ENCODE measurements at regions of chr12 and their contacts with region 1.

Region 1: GRCh38 chr12:7933255-7933729 is 2.7 kb downstream of the SLC2A3 start:
- DNase-seq: peak; percentile 79
- H3K4me3 Mint-ChIP-seq: no peak overlapping the region
- H3K27ac Mint-ChIP-seq: no peak overlapping the region
- H3K4me1 Mint-ChIP-seq: peaks cover 37% of the 10 kb centered on the region
- H3K27me3 Mint-ChIP-seq: no peaks in the 10 kb centered on the region

Region 2: DNA sequence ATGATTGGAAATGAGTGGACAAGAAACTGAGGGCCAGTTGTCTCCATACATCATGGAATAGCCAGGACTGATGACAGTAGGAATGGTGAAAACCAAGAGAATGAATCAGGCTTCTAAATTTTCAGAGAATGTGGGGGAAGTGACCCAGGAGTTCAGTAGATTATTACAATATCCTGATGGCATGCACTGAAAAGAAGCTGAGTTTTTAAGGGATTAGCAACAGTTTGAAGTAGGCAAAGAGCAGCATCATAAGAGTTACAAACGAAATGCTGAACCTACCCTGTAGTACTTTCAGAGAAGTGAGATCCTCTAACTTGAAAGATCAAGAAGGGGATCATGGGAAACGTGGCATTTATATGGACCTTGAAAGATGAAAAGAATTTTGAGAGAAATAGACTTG is 73.7 kb before region 1 on chr12:
- CTCF ChIA-PET with region 1: interaction called, 11 read pairs
- POLR2A ChIA-PET with region 1: interaction called, 4 read pairs
- DNase-seq: no peak
- H3K4me3 Mint-ChIP-seq: no peak overlapping the region
- H3K27ac Mint-ChIP-seq: no peak overlapping the region
- H3K4me1 Mint-ChIP-seq: peaks cover 11% of the 10 kb centered on the region
- H3K27me3 Mint-ChIP-seq: peaks cover 9% of the 10 kb centered on the region

Region 3: DNA sequence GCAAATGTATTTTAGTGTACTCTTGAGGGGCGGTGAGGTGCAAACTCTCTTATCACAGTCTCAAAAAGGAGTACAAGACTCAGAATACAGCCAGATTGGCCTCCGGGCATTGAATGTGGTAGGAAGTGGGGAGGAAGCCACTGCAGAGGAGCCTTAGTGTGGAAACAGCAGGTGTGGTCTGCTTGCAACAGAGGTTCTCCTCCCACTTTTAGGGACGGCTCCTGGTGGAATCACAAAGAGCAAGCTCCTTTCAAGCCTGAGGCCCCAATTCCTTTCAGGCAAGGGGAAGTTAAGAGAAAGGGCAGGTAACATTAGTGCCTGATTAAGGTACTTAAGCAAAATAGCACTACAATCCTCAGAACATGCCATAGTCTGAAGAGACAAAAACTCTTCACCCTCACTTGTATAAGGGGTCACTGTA is 26.4 kb after region 1 on chr12:
- CTCF ChIA-PET with region 1: interaction called, 346 read pairs
- POLR2A ChIA-PET with region 1: interaction called, 819 read pairs
- DNase-seq: peak; percentile 71
- H3K4me3 Mint-ChIP-seq: peak overlapping the region; percentile 86
- H3K27ac Mint-ChIP-seq: peak overlapping the region; percentile 88
- H3K4me1 Mint-ChIP-seq: peaks cover 48% of the 10 kb centered on the region
- H3K27me3 Mint-ChIP-seq: no peaks in the 10 kb centered on the region

Region 4: DNA sequence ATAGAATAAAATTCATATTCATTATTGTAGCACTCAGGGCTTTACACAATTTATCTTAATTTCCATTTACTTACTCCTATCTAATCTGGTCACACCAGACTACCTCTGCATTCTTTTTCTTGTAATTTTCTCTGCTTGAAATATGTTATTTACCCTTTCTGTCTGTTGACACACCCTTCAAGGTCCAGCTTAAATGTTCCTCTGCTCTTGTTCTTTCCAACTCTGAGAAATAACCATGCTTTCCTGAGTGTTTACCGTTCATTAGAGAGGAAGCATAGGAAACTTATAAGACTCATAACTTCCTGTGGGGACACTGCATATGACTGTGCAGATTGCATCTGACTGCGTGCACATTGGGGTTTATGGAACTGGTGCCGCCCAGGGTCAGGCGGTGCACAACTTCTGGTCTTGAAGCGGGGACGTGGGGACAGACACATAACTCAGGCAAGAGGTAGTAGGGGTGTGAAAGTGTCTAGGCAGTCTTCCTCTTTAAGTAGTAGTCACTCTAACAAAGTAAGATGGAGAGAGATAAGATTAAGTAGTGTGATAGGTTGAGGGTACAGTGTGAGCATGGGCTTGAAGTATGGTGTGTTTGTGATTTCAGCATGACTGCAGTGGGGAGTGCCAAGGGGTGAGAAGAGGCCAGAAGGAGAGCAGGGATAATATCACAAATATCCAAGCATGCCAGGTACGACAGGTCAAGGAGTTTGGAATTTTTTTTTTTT is 56.7 kb after region 1 on chr12:
- CTCF ChIA-PET with region 1: interaction called, 100 read pairs
- POLR2A ChIA-PET with region 1: interaction called, 106 read pairs
- DNase-seq: peak; percentile 88
- H3K4me3 Mint-ChIP-seq: peak overlapping the region; percentile 65
- H3K27ac Mint-ChIP-seq: peak overlapping the region; percentile 86
- H3K4me1 Mint-ChIP-seq: peaks cover 56% of the 10 kb centered on the region
- H3K27me3 Mint-ChIP-seq: no peaks in the 10 kb centered on the region

Region 5: GRCh38 chr12:8026291-8026900 is 93.1 kb after region 1 on chr12:
- CTCF ChIA-PET with region 1: interaction called, 5 read pairs
- POLR2A ChIA-PET with region 1: interaction called, 10 read pairs
- DNase-seq: peak; percentile 98
- H3K4me3 Mint-ChIP-seq: peak overlapping the region; percentile 88
- H3K27ac Mint-ChIP-seq: peak overlapping the region; percentile 99
- H3K4me1 Mint-ChIP-seq: peaks cover 17% of the 10 kb centered on the region
- H3K27me3 Mint-ChIP-seq: no peaks in the 10 kb centered on the region

Region 6: GRCh38 chr12:8088574-8088973 is 155.3 kb after region 1 on chr12:
- CTCF ChIA-PET with region 1: interaction called, 3 read pairs
- POLR2A ChIA-PET with region 1: interaction called, 12 read pairs
- DNase-seq: peak; percentile 55
- H3K4me3 Mint-ChIP-seq: peak overlapping the region; percentile 70
- H3K27ac Mint-ChIP-seq: peak overlapping the region; percentile 87
- H3K4me1 Mint-ChIP-seq: peaks cover 50% of the 10 kb centered on the region
- H3K27me3 Mint-ChIP-seq: no peaks in the 10 kb centered on the region

Measured in activated CD4-positive, alpha-beta memory T cell treated with anti-CD3 and anti-CD28 coated beads, Interleukin-2, amount 10 ng/mL, durations not matched to agents 7 days and 5 days (primary cell).